ENCODE measurements at regions of chr22 and their contacts with region 1.

Region 1: DNA sequence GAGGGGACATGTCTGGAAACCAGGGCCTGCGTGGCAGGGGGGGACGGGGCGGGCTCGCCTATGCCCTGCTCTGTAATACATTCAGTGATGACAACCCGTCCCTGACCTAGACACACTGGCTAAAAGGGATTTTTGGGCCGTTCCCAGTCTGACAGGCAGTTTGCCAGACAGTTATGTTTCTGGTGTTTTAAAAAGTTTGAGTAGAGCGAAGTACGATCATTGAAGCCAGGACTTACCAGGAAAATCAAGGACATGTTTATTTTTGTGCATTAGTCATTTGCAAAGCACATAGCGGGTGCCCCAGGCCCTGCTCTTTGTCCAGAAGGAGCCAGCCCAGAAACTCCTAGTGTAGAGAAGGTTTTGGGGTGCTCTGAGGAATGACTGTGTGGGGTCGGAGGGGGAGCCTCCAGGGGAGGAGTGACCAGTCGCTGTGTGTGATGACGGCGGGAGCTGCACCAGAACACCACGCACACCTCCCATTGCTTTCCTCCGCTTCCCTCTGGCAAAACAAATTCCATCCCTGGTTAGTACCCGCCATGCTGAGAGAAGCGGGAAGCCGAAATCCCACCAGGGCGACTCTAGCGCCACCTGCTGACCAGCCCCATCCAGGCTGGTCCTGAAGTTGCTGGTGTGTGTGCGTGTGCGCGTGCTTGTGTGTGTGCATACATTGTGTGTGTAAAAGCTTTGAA is 50.8 kb downstream of the FBLN1 start:
- DNase-seq: peak; percentile 80
- H3K4me3 ChIP-seq: no peak overlapping the region
- H3K27ac ChIP-seq: peak overlapping the region; percentile 70 to 75
- H3K4me1 ChIP-seq: peaks cover 6% of the 10 kb centered on the region
- H3K27me3 ChIP-seq: no peaks in the 10 kb centered on the region
- CTCF ChIP-seq: peak; percentile 83 to 97 (median 94)
- POLR2A ChIP-seq: no peak

Region 2: GRCh38 chr22:45318168-45318557 is 235.3 kb before region 1 on chr22:
- intact Hi-C with region 1: loop called (anchors 5 kb)
- DNase-seq: no peak
- H3K4me3 ChIP-seq: no peak overlapping the region
- H3K27ac ChIP-seq: peak overlapping the region; percentile 87 to 91
- H3K4me1 ChIP-seq: peaks cover 30% of the 10 kb centered on the region
- H3K27me3 ChIP-seq: no peaks in the 10 kb centered on the region
- CTCF ChIP-seq: no peak
- POLR2A ChIP-seq: no peak

Region 3: DNA sequence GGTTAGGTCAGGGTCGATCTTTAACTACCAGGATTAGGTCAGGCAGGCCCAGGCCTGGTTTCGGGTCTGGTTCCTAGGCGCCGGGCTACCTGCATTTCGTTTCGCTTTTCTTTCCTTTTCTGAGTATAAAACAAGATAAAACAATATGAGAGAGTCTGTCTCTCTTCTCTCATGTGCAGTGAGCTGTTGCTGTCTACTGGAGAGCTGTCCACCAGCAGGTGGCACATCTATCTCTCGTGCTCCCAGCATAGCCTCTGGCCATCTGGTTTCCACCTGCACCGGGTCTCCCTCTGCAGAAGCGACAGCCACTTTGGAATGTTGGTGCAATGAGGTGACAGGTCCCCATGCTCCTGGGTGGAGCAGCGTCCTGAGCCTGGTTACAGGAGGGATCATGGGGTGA is 112.4 kb before region 1 on chr22:
- intact Hi-C with region 1: loop called (anchors 2 kb)
- DNase-seq: peak; percentile 57
- H3K4me3 ChIP-seq: no peak overlapping the region
- H3K27ac ChIP-seq: peak overlapping the region; percentile 46 to 51
- H3K4me1 ChIP-seq: no peaks in the 10 kb centered on the region
- H3K27me3 ChIP-seq: no peaks in the 10 kb centered on the region
- CTCF ChIP-seq: peak; percentile 36 to 79 (median 66)
- POLR2A ChIP-seq: no peak